A673 (cell line): ENCODE measurements at regions of chr6 and their contacts with region 1.

Region 1: GRCh38 chr6:1604158-1605030 is 5.3 kb upstream of the FOXC1 start:
- DNase-seq: peak; percentile 81
- H3K4me3 ChIP-seq: peak overlapping the region; percentile 43
- H3K27ac ChIP-seq: no peak overlapping the region
- H3K4me1 ChIP-seq: peaks cover 27% of the 10 kb centered on the region
- H3K27me3 ChIP-seq: peaks cover 49% of the 10 kb centered on the region
- CTCF ChIP-seq: peak; percentile 73

Region 2: GRCh38 chr6:1670702-1671462 is 66.5 kb after region 1 on chr6:
- CTCF ChIA-PET with region 1: no interaction called
- POLR2A ChIA-PET with region 1: no interaction called
- intact Hi-C with region 1: no loop called
- DNase-seq: no peak
- H3K4me3 ChIP-seq: no peak overlapping the region
- H3K27ac ChIP-seq: no peak overlapping the region
- H3K4me1 ChIP-seq: peaks cover 3% of the 10 kb centered on the region
- H3K27me3 ChIP-seq: no peaks in the 10 kb centered on the region
- CTCF ChIP-seq: no peak

Region 3: GRCh38 chr6:1940381-1940780 is 336.0 kb after region 1 on chr6:
- CTCF ChIA-PET with region 1: no interaction called
- POLR2A ChIA-PET with region 1: no interaction called
- intact Hi-C with region 1: no loop called
- DNase-seq: no peak
- H3K4me3 ChIP-seq: no peak overlapping the region
- H3K27ac ChIP-seq: no peak overlapping the region
- H3K4me1 ChIP-seq: no peaks in the 10 kb centered on the region
- H3K27me3 ChIP-seq: no peaks in the 10 kb centered on the region
- CTCF ChIP-seq: no peak

Region 4: GRCh38 chr6:2021713-2022125 is 417.3 kb after region 1 on chr6:
- CTCF ChIA-PET with region 1: no interaction called
- POLR2A ChIA-PET with region 1: no interaction called
- intact Hi-C with region 1: loop called (anchors 5 kb)
- DNase-seq: peak; percentile 92
- H3K4me3 ChIP-seq: no peak overlapping the region
- H3K27ac ChIP-seq: no peak overlapping the region
- H3K4me1 ChIP-seq: peaks cover 45% of the 10 kb centered on the region
- H3K27me3 ChIP-seq: peaks cover 6% of the 10 kb centered on the region
- CTCF ChIP-seq: no peak

Region 5: DNA sequence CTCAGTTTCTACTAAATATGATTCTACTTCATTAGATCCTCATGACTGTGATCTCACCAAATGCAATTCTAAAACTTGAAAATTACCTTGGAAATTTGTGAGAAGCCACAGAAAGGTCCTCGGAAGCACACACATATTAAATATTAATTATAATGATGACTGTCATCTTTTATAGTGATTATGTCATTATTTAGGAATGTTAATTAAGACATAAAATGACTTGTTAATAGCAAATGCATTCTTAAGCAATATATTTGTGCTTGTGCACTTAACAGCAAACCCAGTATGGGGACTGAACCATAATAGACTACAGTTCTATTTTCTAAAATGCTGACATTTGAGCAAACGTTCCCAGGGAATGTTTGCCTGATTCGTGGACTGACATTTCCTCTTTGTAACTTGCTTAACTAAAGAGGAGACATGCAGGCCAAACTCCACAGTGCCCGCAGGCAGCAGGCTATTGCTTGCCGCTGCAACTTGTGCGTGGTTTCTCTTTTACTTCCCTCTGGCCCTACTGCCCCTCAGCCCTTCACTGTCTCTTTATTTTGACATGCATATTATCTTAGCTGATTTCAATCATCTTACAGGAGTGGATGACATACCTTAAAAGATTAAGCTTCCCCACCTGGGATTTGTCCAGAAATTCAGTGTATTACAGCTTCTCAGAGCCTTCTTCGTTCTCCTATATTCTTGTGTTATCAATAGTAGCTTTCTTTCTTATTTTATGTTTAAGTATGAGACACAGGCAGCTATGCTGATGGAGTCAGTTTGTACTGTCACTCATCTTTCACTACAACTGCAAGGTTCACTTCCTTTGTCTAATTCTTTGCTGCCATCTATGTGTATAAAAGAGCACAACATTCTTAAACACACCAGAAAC is 499.5 kb after region 1 on chr6:
- CTCF ChIA-PET with region 1: interaction called, 3 read pairs
- POLR2A ChIA-PET with region 1: no interaction called
- intact Hi-C with region 1: loop called (anchors 1 kb)
- DNase-seq: peak; percentile 60
- H3K4me3 ChIP-seq: no peak overlapping the region
- H3K27ac ChIP-seq: no peak overlapping the region
- H3K4me1 ChIP-seq: peaks cover 7% of the 10 kb centered on the region
- H3K27me3 ChIP-seq: no peaks in the 10 kb centered on the region
- CTCF ChIP-seq: peak; percentile 68

Region 6: GRCh38 chr6:2196079-2196679 is 591.8 kb after region 1 on chr6:
- CTCF ChIA-PET with region 1: no interaction called
- POLR2A ChIA-PET with region 1: no interaction called
- intact Hi-C with region 1: loop called (anchors 2 kb)
- DNase-seq: peak; percentile 70
- H3K4me3 ChIP-seq: no peak overlapping the region
- H3K27ac ChIP-seq: no peak overlapping the region
- H3K4me1 ChIP-seq: no peaks in the 10 kb centered on the region
- H3K27me3 ChIP-seq: no peaks in the 10 kb centered on the region
- CTCF ChIP-seq: peak; percentile 84

Region 7: DNA sequence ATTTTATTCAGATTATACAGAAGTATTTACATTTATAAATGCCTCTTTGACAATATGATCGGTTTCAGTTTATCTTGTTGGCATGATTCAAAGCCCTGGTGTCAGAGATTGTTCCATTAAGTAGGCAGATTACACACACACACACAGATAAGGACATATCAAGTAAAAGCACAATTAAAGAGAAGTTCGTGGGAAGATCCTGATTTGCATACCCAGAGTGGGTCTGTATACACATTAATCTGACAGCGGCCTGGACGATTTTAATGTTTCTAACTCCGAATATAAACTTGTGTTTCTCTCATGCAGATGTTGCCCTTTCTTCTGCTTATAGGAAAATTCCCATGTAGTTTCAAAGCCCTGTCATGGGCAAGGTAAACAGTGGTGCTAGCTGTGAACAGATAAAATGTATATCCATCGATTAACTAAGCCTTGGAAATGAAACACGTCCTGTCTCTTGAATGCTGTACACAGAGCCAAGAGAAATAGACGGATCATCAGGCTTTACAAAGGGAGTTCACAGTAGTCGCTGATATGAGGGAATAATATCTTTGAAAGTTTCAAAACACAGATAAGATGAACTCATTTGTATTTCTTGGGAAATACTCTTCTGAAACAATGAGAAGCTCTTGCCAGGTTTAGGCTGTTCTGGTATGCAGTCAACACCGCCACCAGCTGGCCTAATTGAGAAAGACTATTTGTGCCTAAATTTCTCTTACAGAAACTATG is 749.2 kb after region 1 on chr6:
- CTCF ChIA-PET with region 1: interaction called, 4 read pairs
- POLR2A ChIA-PET with region 1: no interaction called
- intact Hi-C with region 1: loop called (anchors 2 kb)
- DNase-seq: peak; percentile 74
- H3K4me3 ChIP-seq: no peak overlapping the region
- H3K27ac ChIP-seq: no peak overlapping the region
- H3K4me1 ChIP-seq: no peaks in the 10 kb centered on the region
- H3K27me3 ChIP-seq: no peaks in the 10 kb centered on the region
- CTCF ChIP-seq: peak; percentile 84

Region 8: GRCh38 chr6:2695454-2696095 is 1091.2 kb after region 1 on chr6:
- CTCF ChIA-PET with region 1: no interaction called
- POLR2A ChIA-PET with region 1: no interaction called
- intact Hi-C with region 1: loop called (anchors 5 kb)
- DNase-seq: peak; percentile 44
- H3K4me3 ChIP-seq: no peak overlapping the region
- H3K27ac ChIP-seq: no peak overlapping the region
- H3K4me1 ChIP-seq: no peaks in the 10 kb centered on the region
- H3K27me3 ChIP-seq: peaks cover 6% of the 10 kb centered on the region
- CTCF ChIP-seq: peak; percentile 50

Region 9: GRCh38 chr6:3549314-3549940 is 1945.0 kb after region 1 on chr6:
- CTCF ChIA-PET with region 1: no interaction called
- POLR2A ChIA-PET with region 1: no interaction called
- intact Hi-C with region 1: no loop called
- DNase-seq: no peak
- H3K4me3 ChIP-seq: no peak overlapping the region
- H3K27ac ChIP-seq: no peak overlapping the region
- H3K4me1 ChIP-seq: no peaks in the 10 kb centered on the region
- H3K27me3 ChIP-seq: no peaks in the 10 kb centered on the region
- CTCF ChIP-seq: no peak